HepG2 (cell line): ENCODE measurements at regions of chr2 and their contacts with region 1.

Region 1: GRCh38 chr2:180604077-180604476 is 376.3 kb upstream of the UBE2E3 start:
- DNase-seq: peak; percentile 35
- ATAC-seq: peak; percentile 82
- H3K4me3 ChIP-seq: no peak overlapping the region
- H3K27ac ChIP-seq: no peak overlapping the region
- H3K4me1 ChIP-seq: peaks cover 6% of the 10 kb centered on the region; the same call in 1 of the 2 replicates
- H3K27me3 ChIP-seq: no peaks in the 10 kb centered on the region
- CTCF ChIP-seq: peak; percentile 61
- EP300 ChIP-seq: no peak
- POLR2A ChIP-seq: no peak
- RAD21 ChIP-seq: no peak

Region 2: GRCh38 chr2:179936654-179937053 is 667.4 kb before region 1 on chr2:
- CTCF ChIA-PET with region 1: no interaction called
- POLR2A ChIA-PET with region 1: no interaction called
- in situ Hi-C with region 1: no loop called
- intact Hi-C with region 1: no loop called
- DNase-seq: peak; percentile 74
- ATAC-seq: peak; percentile 91
- H3K4me3 ChIP-seq: no peak overlapping the region
- H3K27ac ChIP-seq: no peak overlapping the region
- H3K4me1 ChIP-seq: peaks cover 4% of the 10 kb centered on the region
- H3K27me3 ChIP-seq: no peaks in the 10 kb centered on the region
- CTCF ChIP-seq: peak; percentile 71
- EP300 ChIP-seq: no peak
- POLR2A ChIP-seq: no peak
- RAD21 ChIP-seq: peak; percentile 35; the same call in 1 of the 2 replicates

Region 3: GRCh38 chr2:180125245-180125962 is 478.7 kb before region 1 on chr2:
- CTCF ChIA-PET with region 1: no interaction called
- POLR2A ChIA-PET with region 1: no interaction called
- in situ Hi-C with region 1: no loop called
- intact Hi-C with region 1: loop called (anchors 1 kb)
- DNase-seq: peak; percentile 78
- ATAC-seq: peak; percentile 96
- H3K4me3 ChIP-seq: no peak overlapping the region; a peak in 1 of 6 replicates
- H3K27ac ChIP-seq: no peak overlapping the region
- H3K4me1 ChIP-seq: peaks cover 5% of the 10 kb centered on the region; the same call in 1 of the 2 replicates
- H3K27me3 ChIP-seq: no peaks in the 10 kb centered on the region
- CTCF ChIP-seq: peak; percentile 67
- EP300 ChIP-seq: no peak
- POLR2A ChIP-seq: no peak
- RAD21 ChIP-seq: 0 out of 2 replicates have a peak, but pooled peaks have one; percentile 20

Region 4: GRCh38 chr2:180463608-180464007 is 140.5 kb before region 1 on chr2:
- CTCF ChIA-PET with region 1: no interaction called
- POLR2A ChIA-PET with region 1: no interaction called
- in situ Hi-C with region 1: no loop called
- intact Hi-C with region 1: no loop called
- DNase-seq: no peak
- ATAC-seq: no peak
- H3K4me3 ChIP-seq: no peak overlapping the region
- H3K27ac ChIP-seq: no peak overlapping the region
- H3K4me1 ChIP-seq: no peaks in the 10 kb centered on the region
- H3K27me3 ChIP-seq: no peaks in the 10 kb centered on the region
- CTCF ChIP-seq: no peak
- EP300 ChIP-seq: no peak
- POLR2A ChIP-seq: no peak
- RAD21 ChIP-seq: no peak

Region 5: DNA sequence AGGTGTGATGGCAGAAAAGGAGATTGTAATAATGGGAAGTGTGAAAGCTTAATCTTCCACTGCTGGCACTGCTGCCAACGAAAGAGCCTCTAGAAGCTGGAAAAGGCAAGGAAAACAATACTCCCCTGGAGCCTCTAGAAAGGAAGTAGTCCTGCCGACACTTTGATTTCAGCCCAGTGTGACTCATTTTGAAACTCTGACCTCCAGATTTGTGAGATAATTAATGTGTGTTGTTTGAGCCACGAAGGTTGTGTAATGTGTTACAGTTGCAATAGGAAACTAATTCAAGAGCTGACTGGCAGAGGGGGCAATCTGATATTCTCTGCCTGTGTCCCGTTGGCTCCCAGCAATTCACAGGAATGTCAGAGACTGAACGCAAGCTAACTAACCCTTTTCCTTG is 157.1 kb after region 1 on chr2:
- CTCF ChIA-PET with region 1: no interaction called
- POLR2A ChIA-PET with region 1: no interaction called
- in situ Hi-C with region 1: no loop called
- intact Hi-C with region 1: loop called (anchors 1 kb)
- DNase-seq: peak; percentile 89
- ATAC-seq: peak; percentile 81
- H3K4me3 ChIP-seq: no peak overlapping the region
- H3K27ac ChIP-seq: no peak overlapping the region
- H3K4me1 ChIP-seq: peaks cover 57% of the 10 kb centered on the region
- H3K27me3 ChIP-seq: no peaks in the 10 kb centered on the region
- CTCF ChIP-seq: no peak
- EP300 ChIP-seq: peak; percentile 44 to 80; a peak in 2 of 4 replicates
- POLR2A ChIP-seq: no peak
- RAD21 ChIP-seq: no peak

Region 6: DNA sequence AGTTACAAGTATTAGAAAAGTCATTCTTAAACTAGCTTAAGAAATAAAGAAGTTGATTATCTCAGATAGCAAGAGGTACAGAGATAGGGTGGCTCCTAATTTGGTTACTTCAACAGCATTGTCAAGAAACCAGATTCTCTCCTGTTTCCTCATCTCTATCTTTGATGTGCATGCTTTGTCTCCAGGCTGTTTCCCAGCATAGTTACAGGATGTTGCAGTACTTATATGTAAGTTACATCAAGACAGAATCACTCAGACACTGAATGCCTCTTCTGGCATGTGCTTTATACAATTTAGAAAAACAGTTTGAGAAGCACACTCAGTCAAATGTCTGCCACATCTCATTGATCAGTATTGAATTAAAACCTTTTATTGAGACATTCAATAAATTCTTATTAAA is 186.8 kb after region 1 on chr2:
- CTCF ChIA-PET with region 1: no interaction called
- POLR2A ChIA-PET with region 1: no interaction called
- in situ Hi-C with region 1: no loop called
- intact Hi-C with region 1: loop called (anchors 10 kb)
- DNase-seq: no peak
- ATAC-seq: no peak
- H3K4me3 ChIP-seq: no peak overlapping the region
- H3K27ac ChIP-seq: no peak overlapping the region
- H3K4me1 ChIP-seq: no peaks in the 10 kb centered on the region
- H3K27me3 ChIP-seq: no peaks in the 10 kb centered on the region
- CTCF ChIP-seq: no peak
- EP300 ChIP-seq: no peak
- POLR2A ChIP-seq: no peak
- RAD21 ChIP-seq: no peak

Region 7: GRCh38 chr2:180907731-180908130 is 303.7 kb after region 1 on chr2:
- CTCF ChIA-PET with region 1: no interaction called
- POLR2A ChIA-PET with region 1: no interaction called
- in situ Hi-C with region 1: no loop called
- intact Hi-C with region 1: loop called (anchors 10 kb)
- DNase-seq: no peak
- ATAC-seq: no peak
- H3K4me3 ChIP-seq: no peak overlapping the region
- H3K27ac ChIP-seq: no peak overlapping the region
- H3K4me1 ChIP-seq: no peaks in the 10 kb centered on the region
- H3K27me3 ChIP-seq: no peaks in the 10 kb centered on the region
- CTCF ChIP-seq: no peak
- EP300 ChIP-seq: no peak
- POLR2A ChIP-seq: no peak
- RAD21 ChIP-seq: no peak

Region 8: DNA sequence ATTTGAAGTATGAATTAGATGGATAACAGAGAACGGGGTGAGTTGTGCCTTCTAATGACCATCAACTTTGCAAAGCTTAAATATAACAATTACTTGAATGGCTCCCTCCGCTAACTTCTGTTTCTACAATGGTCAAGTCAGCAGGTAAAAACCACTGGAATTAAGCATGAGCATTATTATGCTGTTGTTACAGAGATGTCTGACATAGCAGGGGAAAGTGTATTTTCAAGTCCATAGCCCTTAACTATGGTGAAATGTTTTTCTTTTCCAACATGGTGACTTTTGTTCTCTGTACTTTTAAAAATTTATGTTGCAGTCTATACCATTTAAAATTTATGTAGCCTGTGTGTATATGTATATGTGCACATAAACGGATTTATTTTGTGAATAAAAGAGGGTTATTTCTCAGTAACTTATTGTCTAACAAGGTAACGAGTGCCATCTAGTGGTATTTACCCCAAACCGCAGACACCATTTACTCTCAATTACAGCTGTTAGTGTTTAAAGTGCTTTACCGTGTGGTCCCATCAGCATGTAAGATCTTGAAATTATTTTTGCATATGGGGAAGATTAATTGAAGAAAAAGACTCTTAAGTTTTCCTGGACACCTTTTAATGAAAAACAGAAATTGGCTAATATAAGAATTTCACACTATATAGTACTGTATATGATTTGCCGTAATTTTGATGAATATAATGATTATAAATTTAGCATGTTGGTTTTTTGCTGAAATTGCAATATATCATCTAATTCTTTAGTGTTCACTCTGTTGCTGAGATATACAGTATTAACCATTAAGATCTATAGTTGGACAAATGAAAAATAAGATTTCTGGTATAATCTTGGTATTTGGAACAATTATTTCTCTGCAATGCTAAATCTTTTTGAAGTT is 454.5 kb after region 1 on chr2:
- CTCF ChIA-PET with region 1: interaction called, 26 read pairs
- POLR2A ChIA-PET with region 1: no interaction called
- in situ Hi-C with region 1: loop called (anchors 10 kb)
- intact Hi-C with region 1: loop called (anchors 1 kb)
- DNase-seq: peak; percentile 60
- ATAC-seq: peak; percentile 81
- H3K4me3 ChIP-seq: no peak overlapping the region
- H3K27ac ChIP-seq: no peak overlapping the region
- H3K4me1 ChIP-seq: no peaks in the 10 kb centered on the region
- H3K27me3 ChIP-seq: no peaks in the 10 kb centered on the region
- CTCF ChIP-seq: peak; percentile 84
- EP300 ChIP-seq: no peak
- POLR2A ChIP-seq: no peak
- RAD21 ChIP-seq: peak; percentile 76

Region 9: GRCh38 chr2:181258720-181259119 is 654.6 kb after region 1 on chr2:
- CTCF ChIA-PET with region 1: no interaction called
- POLR2A ChIA-PET with region 1: no interaction called
- in situ Hi-C with region 1: no loop called
- intact Hi-C with region 1: no loop called
- DNase-seq: peak; percentile 4
- ATAC-seq: no peak
- H3K4me3 ChIP-seq: no peak overlapping the region
- H3K27ac ChIP-seq: no peak overlapping the region
- H3K4me1 ChIP-seq: no peaks in the 10 kb centered on the region
- H3K27me3 ChIP-seq: no peaks in the 10 kb centered on the region
- CTCF ChIP-seq: no peak
- EP300 ChIP-seq: no peak
- POLR2A ChIP-seq: no peak
- RAD21 ChIP-seq: no peak